Left ventricle myocardium inferior (tissue), 1 donor: ENCODE measurements at regions of chr20 and their contacts with region 1.

Region 1: DNA sequence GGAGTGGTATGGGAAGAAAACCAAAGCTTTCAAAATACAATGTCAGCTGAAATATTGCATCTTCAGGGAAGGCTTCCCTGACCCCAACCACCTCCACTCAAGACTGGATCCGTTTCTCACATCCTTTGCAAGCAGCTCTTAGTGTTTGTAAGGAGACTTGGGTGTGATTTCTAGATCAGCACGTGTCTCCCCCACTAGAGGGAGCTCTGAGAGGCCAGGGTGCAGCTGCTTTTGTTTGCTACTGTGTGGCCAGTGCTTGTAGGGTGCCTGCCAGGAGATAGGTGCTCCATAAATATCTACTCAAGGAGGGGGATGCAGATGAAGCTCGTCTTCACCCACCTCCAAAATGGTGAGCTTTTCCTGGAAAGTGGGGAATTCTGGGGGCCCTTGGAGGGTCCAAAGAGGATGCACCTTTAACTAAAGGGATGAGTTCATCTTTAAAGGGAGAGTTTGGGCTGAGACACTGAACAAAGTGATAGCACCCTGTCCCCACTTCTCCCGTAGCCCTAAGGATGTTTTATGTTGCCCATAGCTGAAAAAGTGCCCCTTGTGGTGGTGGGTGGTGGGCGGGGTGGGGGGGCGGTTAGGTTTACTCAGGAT is 52.6 kb upstream of the MAFB start:
- DNase-seq: peak; percentile 27
- H3K4me3 ChIP-seq: no peak overlapping the region
- H3K27ac ChIP-seq: no peak overlapping the region
- H3K4me1 ChIP-seq: no peaks in the 10 kb centered on the region
- H3K27me3 ChIP-seq: peaks cover 65% of the 10 kb centered on the region
- CTCF ChIP-seq: peak; percentile 70

Region 2: GRCh38 chr20:40628877-40629276 is 112.7 kb before region 1 on chr20:
- intact Hi-C with region 1: no loop called
- DNase-seq: no peak
- H3K4me3 ChIP-seq: no peak overlapping the region
- H3K27ac ChIP-seq: no peak overlapping the region
- H3K4me1 ChIP-seq: no peaks in the 10 kb centered on the region
- H3K27me3 ChIP-seq: peaks cover 9% of the 10 kb centered on the region
- CTCF ChIP-seq: no peak

Region 3: GRCh38 chr20:40945754-40946450 is 204.3 kb after region 1 on chr20:
- intact Hi-C with region 1: loop called (anchors 10 kb)
- DNase-seq: peak; percentile 48
- H3K4me3 ChIP-seq: no peak overlapping the region
- H3K27ac ChIP-seq: no peak overlapping the region
- H3K4me1 ChIP-seq: no peaks in the 10 kb centered on the region
- H3K27me3 ChIP-seq: peaks cover 58% of the 10 kb centered on the region
- CTCF ChIP-seq: peak; percentile 65

Region 4: GRCh38 chr20:41191562-41192500 is 450.2 kb after region 1 on chr20:
- intact Hi-C with region 1: no loop called
- DNase-seq: no peak
- H3K4me3 ChIP-seq: no peak overlapping the region
- H3K27ac ChIP-seq: no peak overlapping the region
- H3K4me1 ChIP-seq: peaks cover 11% of the 10 kb centered on the region
- H3K27me3 ChIP-seq: no peaks in the 10 kb centered on the region
- CTCF ChIP-seq: no peak